MCF 10A (cell line): ENCODE measurements at regions of chr12 and their contacts with region 1.

Region 1: GRCh38 chr12:32659908-32660440 is 19.1 kb upstream of the DNM1L start:
- DNase-seq: no peak
- H3K4me3 Mint-ChIP-seq: no peak overlapping the region
- H3K27ac Mint-ChIP-seq: no peak overlapping the region
- H3K4me1 Mint-ChIP-seq: no peaks in the 10 kb centered on the region
- H3K27me3 Mint-ChIP-seq: no peaks in the 10 kb centered on the region
- CTCF ChIP-seq: no peak

Region 2: DNA sequence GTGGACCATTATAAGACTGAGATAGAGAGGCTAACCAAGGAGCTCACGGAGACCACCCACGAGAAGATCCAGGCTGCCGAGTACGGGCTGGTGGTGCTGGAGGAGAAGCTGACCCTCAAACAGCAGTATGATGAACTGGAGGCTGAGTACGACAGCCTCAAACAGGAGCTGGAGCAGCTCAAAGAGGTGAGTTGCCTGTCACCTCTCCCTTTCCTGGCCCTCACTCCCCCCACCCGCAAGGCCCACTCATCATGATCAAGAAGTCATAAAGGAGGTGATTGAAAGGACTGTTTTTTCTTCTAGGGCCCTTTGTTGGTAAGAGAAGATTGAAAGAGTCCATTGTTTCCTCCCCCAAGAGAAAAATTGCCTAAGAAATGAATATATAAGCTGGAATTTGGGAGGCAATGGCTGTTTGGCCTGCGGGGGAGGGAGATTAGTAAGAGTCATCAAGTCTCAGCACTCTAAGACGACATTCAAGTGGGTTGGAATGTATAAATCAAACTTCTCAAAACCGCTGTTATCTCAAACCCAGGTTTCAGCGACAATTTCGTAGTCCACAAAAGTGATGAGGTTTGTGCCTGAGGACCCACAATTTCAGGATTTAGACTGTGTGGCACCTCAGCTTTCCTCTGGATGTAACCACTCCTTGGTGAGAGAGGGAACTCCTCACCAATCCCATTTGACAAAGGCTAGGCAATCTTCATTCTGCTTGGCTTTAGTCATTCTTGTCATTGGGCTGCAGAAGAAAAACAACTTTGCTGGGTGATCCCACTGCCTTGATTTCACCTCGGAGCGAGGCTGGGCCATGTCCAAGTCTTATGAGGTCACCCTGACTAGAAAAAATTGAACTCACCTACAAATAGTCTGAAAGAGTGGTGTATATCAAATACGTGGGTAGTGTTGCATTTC is 552.4 kb before region 1 on chr12:
- CTCF ChIA-PET with region 1: no interaction called
- POLR2A ChIA-PET with region 1: no interaction called
- intact Hi-C with region 1: no loop called
- DNase-seq: peak; percentile 71
- H3K4me3 Mint-ChIP-seq: peak overlapping the region; percentile 81
- H3K27ac Mint-ChIP-seq: peak overlapping the region; percentile 76
- H3K4me1 Mint-ChIP-seq: peaks cover 18% of the 10 kb centered on the region
- H3K27me3 Mint-ChIP-seq: no peaks in the 10 kb centered on the region
- CTCF ChIP-seq: no peak

Region 3: DNA sequence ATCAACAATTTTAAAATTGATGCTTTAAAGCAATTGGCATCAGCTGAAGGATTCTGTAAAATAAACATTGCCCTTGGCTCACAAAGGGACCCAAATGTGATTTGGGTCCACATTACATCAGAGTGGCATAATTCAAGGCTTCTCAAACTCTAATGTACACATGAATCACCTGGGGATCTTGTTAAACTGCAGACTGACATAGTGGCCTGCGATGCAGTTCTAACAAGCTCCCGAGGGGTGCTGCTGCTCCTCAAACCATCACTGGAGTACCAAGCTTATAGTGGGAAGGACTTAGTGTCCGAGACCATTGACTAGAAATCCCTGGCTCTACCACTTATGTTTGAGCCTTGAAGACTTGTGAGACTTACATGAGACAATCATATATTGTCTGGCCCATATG is 12.7 kb before region 1 on chr12:
- CTCF ChIA-PET with region 1: interaction called, 11 read pairs
- POLR2A ChIA-PET with region 1: interaction called, 3 read pairs
- intact Hi-C with region 1: no loop called
- DNase-seq: no peak
- H3K4me3 Mint-ChIP-seq: no peak overlapping the region
- H3K27ac Mint-ChIP-seq: no peak overlapping the region
- H3K4me1 Mint-ChIP-seq: no peaks in the 10 kb centered on the region
- H3K27me3 Mint-ChIP-seq: no peaks in the 10 kb centered on the region
- CTCF ChIP-seq: no peak

Region 4: GRCh38 chr12:32671930-32672780 is 12.2 kb after region 1 on chr12:
- CTCF ChIA-PET with region 1: interaction called, 21 read pairs
- POLR2A ChIA-PET with region 1: interaction called, 3 read pairs
- intact Hi-C with region 1: no loop called
- DNase-seq: peak; percentile 70
- H3K4me3 Mint-ChIP-seq: no peak overlapping the region
- H3K27ac Mint-ChIP-seq: no peak overlapping the region
- H3K4me1 Mint-ChIP-seq: no peaks in the 10 kb centered on the region
- H3K27me3 Mint-ChIP-seq: no peaks in the 10 kb centered on the region
- CTCF ChIP-seq: peak; percentile 62